Ovary (tissue), 10 donors: ENCODE measurements at regions of chr2 and their contacts with region 1.

Region 1: GRCh38 chr2:40592218-40592617 is 140.3 kb upstream of the SLC8A1 start:
- DNase-seq: no peak
- H3K4me3 ChIP-seq: no peak overlapping the region
- H3K27ac ChIP-seq: no peak overlapping the region
- H3K4me1 ChIP-seq: no peaks in the 10 kb centered on the region
- H3K27me3 ChIP-seq: no peaks in the 10 kb centered on the region
- CTCF ChIP-seq: no peak
- EP300 ChIP-seq: no peak
- POLR2A ChIP-seq: no peak

Region 2: DNA sequence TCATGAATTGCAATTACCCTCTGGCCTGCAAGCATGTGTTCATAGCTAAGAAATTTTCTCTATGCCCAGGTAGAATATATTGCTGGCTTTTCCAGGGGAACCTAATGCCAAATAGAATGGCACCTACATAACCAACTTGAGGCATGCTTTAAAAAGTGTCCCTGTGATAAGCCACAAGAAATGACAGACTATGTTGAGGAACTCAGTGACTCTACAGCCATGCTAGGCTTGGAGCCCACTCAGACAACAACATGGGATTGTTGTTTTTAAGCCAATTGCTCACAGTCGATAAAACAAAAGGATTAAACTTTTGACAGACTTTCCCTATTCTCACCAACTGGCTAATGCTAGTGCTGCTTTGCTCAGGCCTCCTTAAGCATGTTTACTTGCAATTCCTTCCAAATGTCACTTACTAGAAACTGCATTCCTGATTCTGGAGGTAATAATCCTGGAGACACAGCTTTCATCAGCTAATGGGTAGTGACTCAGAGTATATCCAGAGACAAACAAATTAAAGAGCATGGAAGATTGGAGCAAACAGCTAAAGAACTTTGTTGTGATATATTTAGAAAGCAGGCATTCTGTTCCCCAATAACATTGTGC is 389.3 kb before region 1 on chr2:
- intact Hi-C with region 1: no loop called
- DNase-seq: no peak
- H3K4me3 ChIP-seq: no peak overlapping the region
- H3K27ac ChIP-seq: no peak overlapping the region
- H3K4me1 ChIP-seq: peaks cover 4% of the 10 kb centered on the region
- H3K27me3 ChIP-seq: no peaks in the 10 kb centered on the region
- CTCF ChIP-seq: no peak
- EP300 ChIP-seq: no peak
- POLR2A ChIP-seq: no peak

Region 3: DNA sequence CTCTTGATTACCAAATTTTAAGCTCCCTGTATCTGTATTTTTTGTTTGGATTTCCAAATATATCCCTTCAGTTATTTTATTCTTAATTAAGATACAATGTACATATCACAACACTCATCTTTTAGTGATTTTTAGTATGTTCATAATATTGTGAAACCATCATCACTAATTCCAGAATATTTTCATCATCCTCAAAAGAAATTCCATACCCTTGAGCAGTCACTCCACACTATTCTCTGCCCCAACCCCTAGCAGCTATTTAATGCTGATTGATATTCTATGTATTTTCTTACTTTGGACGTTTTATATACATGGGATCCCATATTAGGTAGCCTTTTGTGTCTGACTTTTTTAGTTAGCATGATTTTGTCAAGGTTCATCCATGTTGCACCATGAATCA is 13.0 kb before region 1 on chr2:
- intact Hi-C with region 1: loop called in 1 of 4 experiments (anchors 2 kb)
- DNase-seq: no peak
- H3K4me3 ChIP-seq: no peak overlapping the region
- H3K27ac ChIP-seq: no peak overlapping the region
- H3K4me1 ChIP-seq: no peaks in the 10 kb centered on the region
- H3K27me3 ChIP-seq: no peaks in the 10 kb centered on the region
- CTCF ChIP-seq: no peak
- EP300 ChIP-seq: no peak
- POLR2A ChIP-seq: no peak